Posterior vena cava (tissue), 2 donors: ENCODE measurements at regions of chr3 and their contacts with region 1.

Region 1: GRCh38 chr3:17562845-17563244 is 179.6 kb downstream of the TBC1D5 start:
- DNase-seq: no peak

Region 2: DNA sequence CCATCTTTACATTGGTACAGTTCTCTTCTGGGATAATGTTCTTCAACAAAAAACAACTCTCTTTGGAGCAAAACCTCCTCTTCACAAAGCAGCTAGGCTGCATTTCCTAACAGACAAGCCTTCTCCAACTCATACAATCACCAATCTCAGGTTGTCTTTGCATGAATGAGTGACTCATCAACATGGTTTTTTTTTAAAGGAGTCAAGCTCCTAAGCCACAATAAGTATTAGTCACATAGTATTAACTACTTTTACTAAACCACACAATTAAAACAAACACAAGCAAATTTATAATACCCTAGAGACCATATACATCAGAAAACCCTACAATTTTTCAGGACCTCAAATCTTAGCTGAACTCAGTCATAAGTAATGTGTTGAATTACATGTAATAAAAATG is 42.2 kb after region 1 on chr3:
- intact Hi-C with region 1: no loop called
- DNase-seq: no peak

Region 3: GRCh38 chr3:17678116-17678741 is 115.4 kb after region 1 on chr3:
- intact Hi-C with region 1: no loop called
- DNase-seq: no peak

Region 4: GRCh38 chr3:19559724-19560442 is 1997.0 kb after region 1 on chr3:
- intact Hi-C with region 1: loop called in 1 of 2 experiments (anchors 10 kb)
- DNase-seq: no peak